Ovary (tissue), 10 donors: ENCODE measurements at regions of chr16 and their contacts with region 1.

Region 1: GRCh38 chr16:49884033-49885015 is 28.4 kb upstream of the ZNF423 start:
- DNase-seq: no peak
- H3K4me3 ChIP-seq: no peak overlapping the region
- H3K27ac ChIP-seq: no peak overlapping the region
- H3K4me1 ChIP-seq: no peaks in the 10 kb centered on the region
- H3K27me3 ChIP-seq: no peaks in the 10 kb centered on the region
- CTCF ChIP-seq: no peak
- EP300 ChIP-seq: no peak
- POLR2A ChIP-seq: no peak

Region 2: DNA sequence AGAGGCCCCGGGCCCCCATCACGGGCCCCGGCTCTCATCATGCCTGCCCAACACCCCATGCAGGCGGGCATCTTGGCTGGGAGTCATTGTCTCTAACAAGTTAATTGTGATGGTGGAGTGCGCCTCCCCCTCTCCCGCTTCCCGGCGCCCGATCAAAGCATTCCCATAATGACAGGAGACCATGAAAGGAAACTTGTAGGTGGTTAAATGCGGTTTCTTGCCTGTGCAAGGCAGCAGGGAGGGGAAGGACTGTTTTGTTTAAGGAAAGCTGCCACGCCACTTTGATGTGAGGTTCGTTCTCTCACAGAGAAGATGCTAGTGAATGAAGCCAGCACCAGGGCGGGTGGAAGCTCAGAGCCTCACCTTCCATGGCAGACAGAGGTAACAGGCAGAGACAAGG is 465.3 kb before region 1 on chr16:
- intact Hi-C with region 1: loop called in 1 of 4 experiments (anchors 10 kb)
- DNase-seq: no peak
- H3K4me3 ChIP-seq: no peak overlapping the region
- H3K27ac ChIP-seq: no peak overlapping the region
- H3K4me1 ChIP-seq: no peaks in the 10 kb centered on the region
- H3K27me3 ChIP-seq: no peaks in the 10 kb centered on the region
- CTCF ChIP-seq: no peak
- EP300 ChIP-seq: no peak
- POLR2A ChIP-seq: no peak